Activated CD4-positive, alpha-beta T cell treated with anti-CD3 and anti-CD28 coated beads, Interleukin-2, amount 10 ng/mL, durations not matched to agents 24 days and 14 days (primary cell): ENCODE measurements at regions of chr7 and their contacts with region 1.

Region 1: GRCh38 chr7:2529161-2530070 is 9.8 kb downstream of the LFNG start:
- DNase-seq: peak; percentile 87
- H3K4me3 Mint-ChIP-seq: peak overlapping the region; percentile 83
- H3K27ac Mint-ChIP-seq: peak overlapping the region; percentile 98
- H3K4me1 Mint-ChIP-seq: peaks cover 42% of the 10 kb centered on the region
- H3K27me3 Mint-ChIP-seq: no peaks in the 10 kb centered on the region

Region 2: DNA sequence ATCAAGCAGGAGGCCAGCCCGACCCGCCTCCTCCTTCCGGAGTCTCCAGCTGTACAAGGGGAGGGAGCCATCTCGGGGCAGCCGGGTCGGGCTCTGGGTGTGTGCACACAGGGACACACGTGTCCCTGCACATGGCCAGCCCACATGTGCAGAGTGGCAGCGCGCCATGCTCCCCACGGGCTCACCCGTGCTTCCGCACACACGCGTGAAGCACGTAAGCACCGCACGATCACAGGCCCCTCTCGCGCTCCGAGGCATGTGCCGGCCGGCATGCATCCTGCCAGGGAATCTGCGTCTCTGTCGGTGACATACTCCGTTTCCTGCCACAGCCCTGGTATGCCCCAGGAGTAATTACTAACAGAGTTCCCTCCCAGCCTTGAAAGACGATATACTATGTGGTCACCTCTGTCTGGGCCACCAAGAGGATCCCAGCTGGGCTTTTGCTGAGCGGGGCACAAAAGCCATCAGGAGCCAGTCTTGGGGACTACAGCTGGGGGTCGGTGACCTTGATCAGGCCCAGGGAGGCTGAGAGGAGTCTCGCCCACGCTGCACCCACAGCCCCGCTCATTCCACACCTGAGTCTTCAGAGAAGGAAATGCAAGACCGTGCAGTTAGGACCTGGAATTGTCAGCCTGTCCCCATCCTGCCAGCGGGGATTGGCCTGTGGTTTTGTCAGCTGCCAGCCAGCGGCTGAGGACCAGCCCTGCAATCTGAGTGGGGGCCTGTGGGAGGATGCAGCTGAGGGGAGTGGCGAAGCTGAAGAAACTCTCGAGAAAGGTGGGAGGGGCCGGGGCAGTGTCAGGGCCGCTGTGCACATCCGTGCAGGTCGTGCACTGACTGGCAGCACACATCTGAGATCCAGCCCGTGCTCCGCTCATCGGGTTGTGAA is 20.8 kb before region 1 on chr7:
- intact Hi-C with region 1: loop called (anchors 1 kb)
- DNase-seq: peak; percentile 93
- H3K4me3 Mint-ChIP-seq: peak overlapping the region; percentile 67
- H3K27ac Mint-ChIP-seq: peak overlapping the region; percentile 81
- H3K4me1 Mint-ChIP-seq: peaks cover 39% of the 10 kb centered on the region
- H3K27me3 Mint-ChIP-seq: no peaks in the 10 kb centered on the region

Region 3: DNA sequence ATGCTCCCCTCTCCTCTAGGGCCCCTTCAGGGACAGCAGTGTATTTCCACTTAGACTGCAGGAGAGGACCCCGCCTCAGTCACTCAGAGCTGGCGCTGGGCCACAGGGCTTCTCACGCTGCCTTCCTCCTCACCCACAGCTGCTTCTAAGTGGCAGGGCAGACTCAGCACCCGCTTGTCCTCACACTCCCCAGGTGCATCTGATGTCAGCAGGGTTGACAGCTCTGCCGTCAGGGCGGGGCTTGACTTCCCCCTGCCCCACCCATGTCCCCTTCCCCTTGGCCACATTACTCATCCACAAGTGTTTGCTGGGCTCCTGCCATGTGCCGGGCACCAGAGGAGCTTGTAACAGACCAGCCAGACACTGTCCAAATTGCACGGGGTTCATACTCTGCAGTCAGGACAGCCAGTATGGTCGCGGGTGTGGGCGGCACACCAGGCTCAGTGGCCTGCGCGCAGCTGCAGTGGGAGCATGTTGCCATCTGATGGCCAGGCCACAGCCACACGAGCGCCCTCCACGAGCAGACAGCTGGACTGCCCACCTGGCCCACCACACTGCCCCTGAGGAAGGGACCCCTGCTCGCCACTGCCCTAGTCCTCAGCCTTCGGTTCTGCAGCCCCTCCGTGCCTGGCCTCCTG is 73.1 kb after region 1 on chr7:
- intact Hi-C with region 1: no loop called
- DNase-seq: no peak
- H3K4me3 Mint-ChIP-seq: no peak overlapping the region
- H3K27ac Mint-ChIP-seq: no peak overlapping the region
- H3K4me1 Mint-ChIP-seq: no peaks in the 10 kb centered on the region
- H3K27me3 Mint-ChIP-seq: no peaks in the 10 kb centered on the region

Region 4: GRCh38 chr7:2863461-2864066 is 334.1 kb after region 1 on chr7:
- intact Hi-C with region 1: no loop called
- DNase-seq: peak; percentile 92
- H3K4me3 Mint-ChIP-seq: peak overlapping the region; percentile 73
- H3K27ac Mint-ChIP-seq: peak overlapping the region; percentile 86
- H3K4me1 Mint-ChIP-seq: peaks cover 29% of the 10 kb centered on the region
- H3K27me3 Mint-ChIP-seq: no peaks in the 10 kb centered on the region